Aorta (tissue), 5 donors: ENCODE measurements at regions of chr1 and their contacts with region 1.

Region 1: GRCh38 chr1:158203693-158204457 is 23.2 kb downstream of the CD1D start:
- DNase-seq: no peak
- ATAC-seq: peak; percentile 83
- H3K4me3 ChIP-seq: no peak overlapping the region
- H3K27ac ChIP-seq: no peak overlapping the region
- H3K4me1 ChIP-seq: peaks cover 0 to 3% of the 10 kb centered on the region in 2 donors
- H3K27me3 ChIP-seq: no peaks in the 10 kb centered on the region

Region 2: GRCh38 chr1:158002022-158002630 is 201.7 kb before region 1 on chr1:
- intact Hi-C with region 1: no loop called
- DNase-seq: no peak
- ATAC-seq: peak; percentile 36
- H3K4me3 ChIP-seq: no peak overlapping the region
- H3K27ac ChIP-seq: peak overlapping the region; percentile 49 to 62
- H3K4me1 ChIP-seq: peaks cover 1 to 12% of the 10 kb centered on the region in 2 donors
- H3K27me3 ChIP-seq: no peaks in the 10 kb centered on the region

Region 3: GRCh38 chr1:158527190-158527815 is 323.4 kb after region 1 on chr1:
- intact Hi-C with region 1: loop called (anchors 5 kb)
- DNase-seq: no peak
- ATAC-seq: no peak
- H3K4me3 ChIP-seq: no peak overlapping the region
- H3K27ac ChIP-seq: no peak overlapping the region
- H3K4me1 ChIP-seq: no peaks in the 10 kb centered on the region
- H3K27me3 ChIP-seq: no peaks in the 10 kb centered on the region

Region 4: GRCh38 chr1:158998781-158999161 is 794.9 kb after region 1 on chr1:
- intact Hi-C with region 1: loop called (anchors 5 to 10 kb)
- DNase-seq: peak; percentile 79 to 82
- ATAC-seq: peak; percentile 81
- H3K4me3 ChIP-seq: peak overlapping the region; percentile 49 to 94
- H3K27ac ChIP-seq: no peak overlapping the region
- H3K4me1 ChIP-seq: no peaks in the 10 kb centered on the region
- H3K27me3 ChIP-seq: no peaks in the 10 kb centered on the region

Region 5: GRCh38 chr1:159071970-159072582 is 868.2 kb after region 1 on chr1:
- intact Hi-C with region 1: loop called in 1 of 2 experiments (anchors 10 kb)
- DNase-seq: no peak
- ATAC-seq: peak; percentile 85
- H3K4me3 ChIP-seq: no peak overlapping the region
- H3K27ac ChIP-seq: no peak overlapping the region
- H3K4me1 ChIP-seq: no peaks in the 10 kb centered on the region
- H3K27me3 ChIP-seq: no peaks in the 10 kb centered on the region